Transverse colon (tissue), 4 donors: ENCODE measurements at regions of chr1 and their contacts with region 1.

Region 1: GRCh38 chr1:20493839-20494608 is 8.0 kb upstream of the CAMK2N1 start:
- DNase-seq: peak; percentile 93
- H3K4me3 ChIP-seq: no peak overlapping the region
- H3K27ac ChIP-seq: no peak overlapping the region
- H3K4me1 ChIP-seq: peaks cover 0 to 15% (median 7%) of the 10 kb centered on the region in 4 donors
- H3K27me3 ChIP-seq: no peaks in the 10 kb centered on the region
- CTCF ChIP-seq: peak; percentile 96 to 99 (median 98)
- EP300 ChIP-seq: no peak
- POLR2A ChIP-seq: no peak

Region 2: DNA sequence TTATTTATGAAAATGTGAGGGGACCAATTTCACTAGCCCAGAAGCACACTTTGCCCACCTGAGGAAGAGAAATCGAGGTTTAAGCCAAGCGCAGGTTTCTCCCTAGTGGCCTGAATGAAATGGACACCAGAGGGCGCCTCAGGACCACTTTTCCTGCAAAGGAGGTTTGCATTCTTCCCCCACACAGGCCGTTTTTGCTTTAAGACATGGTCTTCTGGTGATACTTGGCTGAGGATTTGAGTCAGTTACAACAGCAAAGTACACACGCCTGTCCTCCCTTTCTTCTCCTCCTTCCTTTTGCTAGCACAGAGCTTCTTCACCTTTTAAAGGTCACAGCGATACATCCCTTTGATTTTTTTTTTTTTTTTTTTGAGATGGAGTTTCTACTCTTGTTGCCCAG is 576.0 kb before region 1 on chr1:
- in situ Hi-C with region 1: loop called in 1 of 4 experiments (anchors 10 kb)
- intact Hi-C with region 1: loop called (anchors 10 kb)
- DNase-seq: peak; percentile 86
- H3K4me3 ChIP-seq: no peak overlapping the region
- H3K27ac ChIP-seq: no peak overlapping the region
- H3K4me1 ChIP-seq: peaks cover 0 to 8% (median 0%) of the 10 kb centered on the region in 4 donors
- H3K27me3 ChIP-seq: no peaks in the 10 kb centered on the region
- CTCF ChIP-seq: peak; percentile 85 to 91 (median 89)
- EP300 ChIP-seq: no peak
- POLR2A ChIP-seq: no peak

Region 3: GRCh38 chr1:20093940-20094391 is 400.1 kb before region 1 on chr1:
- in situ Hi-C with region 1: no loop called
- intact Hi-C with region 1: loop called (anchors 10 kb)
- DNase-seq: no peak
- H3K4me3 ChIP-seq: no peak overlapping the region
- H3K27ac ChIP-seq: peak overlapping the region in 2 of 4 donors; percentile 9 to 48
- H3K4me1 ChIP-seq: peaks cover 0 to 8% (median 0%) of the 10 kb centered on the region in 4 donors
- H3K27me3 ChIP-seq: no peaks in the 10 kb centered on the region
- CTCF ChIP-seq: no peak
- EP300 ChIP-seq: no peak
- POLR2A ChIP-seq: no peak

Region 4: GRCh38 chr1:20212685-20213331 is 281.2 kb before region 1 on chr1:
- in situ Hi-C with region 1: loop called (anchors 5 to 10 kb)
- intact Hi-C with region 1: loop called (anchors 2 kb)
- DNase-seq: peak; percentile 81
- H3K4me3 ChIP-seq: peak overlapping the region in 1 of 4 donors; percentile 36
- H3K27ac ChIP-seq: peak overlapping the region; percentile 61 to 72 (median 71)
- H3K4me1 ChIP-seq: peaks cover 9 to 26% (median 20%) of the 10 kb centered on the region in 4 donors
- H3K27me3 ChIP-seq: peaks cover 11% of the 10 kb centered on the region
- CTCF ChIP-seq: peak; percentile 77 to 84 (median 83)
- EP300 ChIP-seq: no peak
- POLR2A ChIP-seq: no peak

Region 5: DNA sequence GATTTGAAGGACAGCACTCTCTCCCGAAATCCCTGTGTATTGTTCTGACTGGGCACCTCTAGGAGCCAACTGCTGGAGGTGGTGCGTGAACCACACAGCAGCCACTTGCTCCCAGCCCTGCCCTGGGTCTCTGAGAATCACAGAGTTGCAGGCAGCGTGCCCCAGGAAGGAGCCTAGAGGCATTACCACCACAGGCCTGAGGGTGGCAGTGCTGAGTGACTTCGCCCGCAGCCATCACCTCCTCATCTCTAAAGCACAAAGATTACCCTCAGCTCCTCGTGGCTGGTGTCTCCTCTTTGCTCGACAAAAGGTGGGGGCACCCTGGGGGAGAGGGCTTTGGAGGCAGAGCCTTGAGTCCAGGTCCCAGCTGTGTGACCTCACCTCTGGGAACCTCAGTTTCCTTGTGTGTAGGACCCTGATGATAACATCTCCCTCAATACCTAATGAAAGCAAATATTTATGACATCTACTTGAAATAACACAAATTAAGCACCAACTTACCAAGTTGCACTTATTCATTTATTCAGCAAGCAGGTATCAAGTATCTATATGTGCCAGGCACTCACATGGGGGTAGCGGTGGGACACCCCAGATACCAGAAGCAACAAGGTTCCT is 117.0 kb before region 1 on chr1:
- in situ Hi-C with region 1: loop called in 3 of 4 experiments (anchors 10 kb)
- intact Hi-C with region 1: loop called (anchors 5 kb)
- DNase-seq: peak; percentile 63
- H3K4me3 ChIP-seq: no peak overlapping the region
- H3K27ac ChIP-seq: no peak overlapping the region
- H3K4me1 ChIP-seq: no peaks in the 10 kb centered on the region
- H3K27me3 ChIP-seq: peaks cover 22% of the 10 kb centered on the region
- CTCF ChIP-seq: peak; percentile 71 to 87 (median 81)
- EP300 ChIP-seq: no peak
- POLR2A ChIP-seq: no peak

Region 6: GRCh38 chr1:20430355-20431175 is 63.5 kb before region 1 on chr1:
- in situ Hi-C with region 1: loop called in 1 of 4 experiments (anchors 10 kb)
- intact Hi-C with region 1: no loop called
- DNase-seq: peak; percentile 41
- H3K4me3 ChIP-seq: no peak overlapping the region
- H3K27ac ChIP-seq: no peak overlapping the region
- H3K4me1 ChIP-seq: peaks cover 0 to 3% (median 0%) of the 10 kb centered on the region in 4 donors
- H3K27me3 ChIP-seq: peaks cover 7% of the 10 kb centered on the region
- CTCF ChIP-seq: peak; percentile 61 to 80 (median 71)
- EP300 ChIP-seq: no peak
- POLR2A ChIP-seq: no peak